ENCODE measurements at regions of chr1 and their contacts with region 1.

Region 1: DNA sequence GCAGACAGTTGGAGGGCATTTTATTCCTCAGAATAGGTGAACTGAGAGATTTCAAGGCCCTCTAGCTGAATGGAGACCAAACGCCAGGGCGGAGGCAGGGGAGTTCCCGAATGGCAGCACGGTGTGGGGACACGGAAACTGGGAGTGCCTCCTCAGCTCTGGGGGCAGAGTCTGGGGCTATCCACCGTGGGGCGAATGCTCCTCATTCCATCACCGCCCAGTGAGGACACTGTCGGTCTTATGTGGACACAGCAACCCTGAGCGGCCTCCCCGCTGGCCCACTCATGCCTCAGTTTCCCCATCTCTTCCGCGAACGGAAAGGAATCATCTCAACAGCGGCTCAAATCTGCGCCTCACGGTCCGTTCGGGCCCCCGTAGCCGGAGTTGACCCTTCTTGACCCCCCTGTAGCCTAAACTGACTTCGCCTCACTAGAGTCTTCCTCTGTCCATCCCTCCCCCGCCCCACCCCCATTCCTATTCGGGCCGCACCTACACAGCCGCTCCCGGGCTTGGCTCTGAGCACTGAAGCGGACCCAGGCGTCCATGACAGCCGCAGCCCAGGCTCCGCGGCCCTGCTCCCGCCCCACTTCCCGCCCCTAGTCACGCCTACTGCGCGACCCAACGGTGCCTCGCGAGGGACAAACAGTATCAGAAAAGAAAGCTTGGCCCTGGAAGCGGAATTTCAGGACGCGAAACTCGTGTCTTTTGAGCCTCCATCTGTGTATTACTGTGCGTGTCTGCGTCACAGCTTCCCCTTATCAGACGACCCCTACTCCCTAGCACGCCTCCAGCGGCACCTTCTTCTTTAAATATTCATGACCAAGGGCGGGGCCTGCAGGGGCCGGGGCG is at the start of gene PEX11B:
- DNase-seq: peak; percentile 80 to 88
- ATAC-seq: peak; percentile 86 to 88
- H3K4me3 ChIP-seq: peak within 1 kb of the TSS; percentile 76 to 97 (median 88)
- H3K27ac ChIP-seq: peak within 1 kb of the TSS; percentile 92 to 98 (median 92)
- H3K4me1 ChIP-seq: peaks cover 25 to 36% of the 10 kb centered on the region in 2 donors
- H3K27me3 ChIP-seq: no peaks in the 10 kb centered on the region
- CTCF ChIP-seq: peak in 2 of 5 experiments; percentile 17 to 27
- POLR2A ChIP-seq: peak; percentile 68 to 74
- total RNA-seq, gene PEX11B: 23.2 to 46.0 (median 31.7) TPM

Region 2: DNA sequence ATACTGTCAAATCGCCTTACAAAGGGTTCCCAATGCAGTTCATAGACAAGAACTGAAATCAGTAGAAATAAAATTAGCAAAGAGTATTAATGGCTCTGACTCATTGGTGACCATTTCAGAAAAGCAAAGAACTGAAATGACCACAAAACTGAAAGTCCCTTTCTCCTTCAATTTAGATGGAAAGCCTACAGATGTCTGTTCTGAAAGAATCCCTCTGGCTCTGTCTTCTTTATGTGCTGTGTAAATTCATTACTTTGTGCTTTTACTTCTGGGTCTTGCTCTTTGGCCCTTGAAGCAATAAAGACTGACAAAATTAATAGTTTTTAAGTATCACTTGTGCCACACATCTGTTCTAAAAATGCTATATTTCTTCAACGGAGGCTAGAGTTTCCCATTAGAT is 373.3 kb before region 1 on chr1:
- in situ Hi-C with region 1: no loop called
- intact Hi-C with region 1: no loop called
- DNase-seq: no peak
- ATAC-seq: no peak
- H3K4me3 ChIP-seq: no peak overlapping the region
- H3K27ac ChIP-seq: no peak overlapping the region
- H3K4me1 ChIP-seq: no peaks in the 10 kb centered on the region
- H3K27me3 ChIP-seq: peaks cover 0 to 4% (median 0%) of the 10 kb centered on the region in 3 donors
- CTCF ChIP-seq: no peak
- POLR2A ChIP-seq: no peak

Region 3: GRCh38 chr1:145765574-145765973 is 152.8 kb before region 1 on chr1:
- in situ Hi-C with region 1: no loop called
- intact Hi-C with region 1: no loop called
- DNase-seq: no peak
- ATAC-seq: no peak
- H3K4me3 ChIP-seq: no peak overlapping the region
- H3K27ac ChIP-seq: no peak overlapping the region
- H3K4me1 ChIP-seq: no peaks in the 10 kb centered on the region
- H3K27me3 ChIP-seq: no peaks in the 10 kb centered on the region
- CTCF ChIP-seq: no peak
- POLR2A ChIP-seq: no peak

Region 4: DNA sequence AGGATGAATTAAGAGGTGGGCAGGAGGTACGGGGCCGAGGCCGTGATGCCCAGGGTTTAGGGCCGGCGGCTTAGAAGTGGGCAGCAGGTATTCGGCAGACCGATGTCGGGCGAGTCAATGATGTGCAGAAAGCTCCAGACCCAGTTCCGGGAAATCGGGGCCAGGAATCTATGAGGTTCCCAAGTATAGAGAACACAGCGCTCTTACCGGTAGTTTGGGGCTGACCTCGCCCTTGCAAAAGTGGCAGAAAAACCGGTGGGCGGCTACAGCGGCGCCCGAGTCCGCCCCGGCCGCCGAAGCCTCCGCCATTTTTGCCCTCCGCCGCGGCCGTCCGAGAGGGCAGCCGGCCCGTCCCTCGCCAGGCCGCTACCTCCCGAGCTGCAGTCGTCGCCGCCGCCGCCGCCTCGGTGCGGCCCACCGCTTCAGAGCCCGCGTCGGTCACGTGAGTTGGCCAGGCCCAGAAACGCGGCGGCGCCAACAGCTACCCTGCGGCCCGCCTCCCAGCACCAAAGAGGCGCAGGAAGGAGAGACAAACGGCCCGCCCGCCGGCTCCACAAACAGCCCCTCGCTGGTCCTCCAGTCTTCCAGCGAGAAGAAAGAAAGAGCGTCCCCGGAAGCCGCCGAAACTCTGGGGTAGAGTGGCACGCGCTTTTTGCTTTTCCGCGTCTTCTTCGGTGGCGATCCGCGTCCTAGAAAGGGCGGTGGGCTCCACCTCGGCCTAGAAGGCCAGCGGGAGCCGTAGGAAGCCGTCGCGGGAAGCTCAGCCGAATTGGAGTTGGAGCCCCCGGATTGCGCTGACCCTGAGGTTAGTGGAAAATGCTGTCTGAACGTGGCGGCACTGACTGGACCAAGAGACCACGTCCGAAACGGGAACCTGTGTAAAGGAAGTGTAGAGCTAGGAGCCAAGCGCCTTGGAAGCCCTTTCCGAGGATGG is 94.5 kb before region 1 on chr1 and contains the starts of genes POLR3C and RNF115:
- in situ Hi-C with region 1: no loop called
- intact Hi-C with region 1: no loop called
- DNase-seq: peak; percentile 89 to 91
- ATAC-seq: peak; percentile 87 to 89
- H3K4me3 ChIP-seq: peak within 1 kb of the TSS; percentile 63 to 80 (median 74)
- H3K27ac ChIP-seq: peak within 1 kb of the TSS; percentile 86 to 92 (median 88)
- H3K4me1 ChIP-seq: peaks cover 15 to 19% of the 10 kb centered on the region in 2 donors
- H3K27me3 ChIP-seq: no peaks in the 10 kb centered on the region
- CTCF ChIP-seq: no peak
- POLR2A ChIP-seq: peak; percentile 94 to 97
- total RNA-seq, gene POLR3C: 23.0 to 27.8 (median 26.4) TPM
- total RNA-seq, gene RNF115: 16.1 to 65.4 (median 37.3) TPM

Region 5: GRCh38 chr1:145858894-145859490 is 59.4 kb before region 1 on chr1 and contains the start of gene PIAS3:
- in situ Hi-C with region 1: no loop called
- intact Hi-C with region 1: loop called (anchors 5 kb)
- DNase-seq: peak; percentile 95
- ATAC-seq: peak; percentile 82 to 83
- H3K4me3 ChIP-seq: peak within 1 kb of the TSS; percentile 74 to 96 (median 82)
- H3K27ac ChIP-seq: peak within 1 kb of the TSS; percentile 90 to 96 (median 92)
- H3K4me1 ChIP-seq: peaks cover 19 to 21% of the 10 kb centered on the region in 2 donors
- H3K27me3 ChIP-seq: no peaks in the 10 kb centered on the region
- CTCF ChIP-seq: no peak
- POLR2A ChIP-seq: peak; percentile 85 to 89
- total RNA-seq, gene PIAS3: 26.2 to 40.0 (median 35.7) TPM

Region 6: DNA sequence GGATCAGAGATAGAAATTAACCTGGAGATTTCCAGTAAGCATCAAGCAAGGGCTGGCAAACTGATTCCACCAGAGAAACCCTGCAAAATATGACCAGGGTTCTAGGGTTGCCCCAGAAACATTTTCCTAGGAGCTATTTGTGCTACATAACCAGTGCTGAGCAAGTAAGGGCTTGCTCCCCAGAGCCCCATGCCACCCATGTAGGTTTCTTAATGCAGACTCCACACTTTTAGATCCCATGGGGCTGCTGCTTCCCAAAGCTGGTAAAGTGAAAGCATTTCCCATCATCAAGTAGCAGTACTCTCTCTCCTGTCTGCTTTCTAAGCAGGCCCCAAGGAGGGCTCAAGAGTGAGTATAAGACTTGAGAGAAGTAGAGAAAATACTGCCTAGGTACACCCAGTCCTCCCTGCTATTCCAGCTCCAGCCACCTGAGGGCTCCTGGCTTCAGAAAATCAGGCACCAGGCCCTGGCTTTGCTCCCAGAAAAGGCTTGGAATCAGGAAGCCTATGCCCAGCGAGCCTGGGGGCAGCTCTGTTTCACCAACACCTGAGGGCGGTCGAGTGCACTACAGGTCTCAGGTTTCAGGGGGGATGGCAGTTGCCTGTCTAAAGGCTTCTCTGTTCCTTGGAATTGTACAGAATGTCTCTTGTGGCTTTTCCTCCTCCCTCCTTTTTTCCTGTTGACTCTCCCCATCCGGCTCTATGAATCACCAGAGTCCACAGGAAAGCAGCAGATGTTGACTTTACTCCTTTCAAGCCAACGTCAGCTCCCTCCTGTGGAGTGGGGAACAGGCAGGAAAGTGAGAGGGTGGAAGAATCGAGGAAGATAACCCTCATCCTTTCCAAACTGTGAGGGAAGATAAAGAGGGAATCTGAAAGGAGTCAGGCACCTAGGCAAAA is 26.5 kb before region 1 on chr1:
- in situ Hi-C with region 1: no loop called
- intact Hi-C with region 1: no loop called
- DNase-seq: peak; percentile 98
- ATAC-seq: peak; percentile 89 to 90
- H3K4me3 ChIP-seq: peak overlapping the region in 3 of 4 donors; percentile 6 to 29 (median 12)
- H3K27ac ChIP-seq: peak overlapping the region; percentile 88 to 98 (median 91)
- H3K4me1 ChIP-seq: peaks cover 36 to 43% of the 10 kb centered on the region in 2 donors
- H3K27me3 ChIP-seq: no peaks in the 10 kb centered on the region
- CTCF ChIP-seq: peak; percentile 92 to 98 (median 97)
- POLR2A ChIP-seq: peak; percentile 44 to 85

Region 7: DNA sequence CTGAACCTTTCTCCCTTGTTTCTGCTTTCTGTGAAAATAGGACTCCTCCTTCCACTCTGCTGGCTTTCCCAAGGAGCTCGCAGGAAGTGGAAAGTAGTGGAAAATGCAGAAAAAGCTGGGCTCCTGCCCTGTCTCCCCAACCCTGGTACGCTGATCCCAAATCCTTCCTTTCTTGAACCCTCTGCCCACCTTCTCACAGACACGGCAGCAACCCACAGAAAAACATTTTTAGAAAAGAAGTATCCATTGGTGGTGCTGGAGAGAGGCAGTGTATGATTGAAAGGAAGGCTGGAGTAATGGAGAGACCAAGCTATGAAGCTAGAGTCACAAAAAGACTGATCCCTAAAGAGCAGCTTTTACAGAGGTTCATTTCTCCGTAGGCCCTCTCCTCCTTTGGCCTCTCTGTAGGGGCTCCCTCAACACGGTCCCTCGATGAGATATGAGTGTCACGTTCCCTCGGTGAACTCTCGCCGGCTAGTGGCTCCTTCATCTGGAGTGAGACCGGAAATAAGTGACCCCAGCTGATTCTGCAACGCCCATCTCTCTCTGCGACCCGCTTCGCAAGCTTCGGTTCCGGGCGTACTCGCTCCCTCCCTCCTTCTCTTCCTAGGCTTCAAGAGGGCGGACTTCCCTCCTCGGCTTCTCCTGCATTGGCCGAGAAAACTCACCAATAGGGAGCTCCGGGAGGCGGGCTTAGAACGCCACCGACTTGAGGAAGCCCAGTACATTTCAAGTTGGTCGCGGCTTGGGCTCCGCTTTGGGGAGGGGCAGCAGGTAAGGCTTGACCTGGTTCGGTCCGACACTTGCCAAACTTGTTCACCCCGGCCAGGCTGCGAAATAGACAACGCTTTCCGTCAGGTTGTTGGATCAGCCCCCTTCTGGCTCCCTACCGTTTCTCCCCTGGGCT is 45.9 kb after region 1 on chr1 and contains the starts of genes ANKRD34A and POLR3GL:
- in situ Hi-C with region 1: no loop called
- intact Hi-C with region 1: loop called (anchors 2 kb)
- DNase-seq: peak; percentile 97
- ATAC-seq: peak; percentile 81 to 88
- H3K4me3 ChIP-seq: peak within 1 kb of the TSS; percentile 67 to 82 (median 73)
- H3K27ac ChIP-seq: peak within 1 kb of the TSS; percentile 88 to 99 (median 96)
- H3K4me1 ChIP-seq: peaks cover 28 to 34% of the 10 kb centered on the region in 2 donors
- H3K27me3 ChIP-seq: no peaks in the 10 kb centered on the region
- CTCF ChIP-seq: peak in 1 of 5 experiments; percentile 1
- POLR2A ChIP-seq: peak; percentile 91 to 97
- total RNA-seq, gene ANKRD34A: 3.3 to 19.0 (median 6.7) TPM
- total RNA-seq, gene POLR3GL: 43.5 to 78.8 (median 59.4) TPM

Region 8: DNA sequence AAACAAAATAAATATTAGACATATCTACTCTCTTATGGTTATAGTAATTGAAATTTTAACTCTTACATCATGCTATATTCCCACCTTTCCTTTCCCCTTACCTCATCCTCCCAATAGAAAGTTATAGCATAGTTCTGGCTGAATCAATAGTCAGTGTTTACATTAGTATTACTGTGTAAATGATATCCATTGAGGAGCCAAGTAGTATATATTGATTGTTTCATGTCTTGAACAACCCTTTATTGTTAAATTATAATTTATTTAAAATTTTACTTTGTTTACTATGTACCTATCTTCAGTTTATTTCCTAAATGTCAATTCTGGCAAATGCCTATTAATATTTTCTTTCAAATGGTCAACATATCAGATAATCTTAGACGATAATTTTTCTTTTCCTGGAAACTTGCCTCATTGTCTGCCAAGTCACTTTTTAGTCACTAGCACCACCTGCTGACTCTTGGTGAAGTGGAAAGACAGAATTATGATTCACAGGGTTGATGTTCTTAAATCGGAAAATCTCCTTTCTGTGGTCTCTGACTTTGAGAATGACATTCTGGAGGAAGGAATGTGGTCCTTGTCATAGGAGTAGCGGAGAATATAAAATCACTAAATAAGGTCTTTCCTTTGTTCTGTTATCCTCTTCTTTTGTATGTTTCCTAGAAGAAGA is 94.5 kb after region 1 on chr1:
- in situ Hi-C with region 1: loop called in 1 of 4 experiments (anchors 5 kb)
- intact Hi-C with region 1: no loop called
- DNase-seq: no peak
- ATAC-seq: peak; percentile 68 to 75
- H3K4me3 ChIP-seq: no peak overlapping the region
- H3K27ac ChIP-seq: peak overlapping the region; percentile 7 to 40 (median 20)
- H3K4me1 ChIP-seq: peaks cover 6 to 17% of the 10 kb centered on the region in 2 donors
- H3K27me3 ChIP-seq: no peaks in the 10 kb centered on the region
- CTCF ChIP-seq: peak; percentile 67 to 77 (median 73)
- POLR2A ChIP-seq: no peak

Measured in gastrocnemius medialis (tissue), 4 donors.